GM13976 (cell line): ENCODE measurements at regions of chr9 and their contacts with region 1.

Region 1: DNA sequence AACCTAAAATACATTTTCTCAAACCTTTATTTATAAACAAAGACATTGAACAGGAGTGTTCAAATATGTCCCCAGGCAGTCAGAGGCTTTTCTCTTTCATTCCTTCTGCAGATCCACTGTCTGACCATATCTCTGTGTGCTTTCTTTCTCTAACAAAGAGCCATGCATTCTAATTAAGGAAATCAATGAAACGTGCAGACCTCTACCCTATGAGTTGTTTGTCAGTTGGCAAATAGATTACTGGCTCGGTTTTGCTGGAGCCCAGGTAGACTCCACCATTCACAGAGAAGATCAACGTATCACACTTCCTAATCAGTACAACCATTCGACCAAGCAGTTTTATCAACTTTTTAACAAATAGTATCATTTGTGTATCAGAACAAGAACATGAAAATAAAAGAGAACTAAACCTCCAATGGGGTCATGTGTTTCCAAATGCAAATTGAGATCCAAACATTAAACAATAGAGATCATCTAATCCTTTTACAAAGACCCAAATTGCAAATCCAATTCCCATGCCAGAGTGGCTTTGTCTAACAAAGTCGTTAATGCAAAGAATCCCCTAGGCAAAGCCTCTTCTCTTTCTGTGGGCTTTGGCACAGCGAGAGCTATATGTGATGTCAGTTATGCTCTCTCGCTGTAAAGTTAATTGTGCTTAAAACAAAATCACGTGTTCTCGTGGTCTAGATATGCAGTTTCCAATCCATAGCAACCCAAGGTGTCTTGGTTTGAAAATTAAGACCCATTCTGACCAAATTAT is 16.8 kb downstream of the KLF4 start:
- DNase-seq: no peak
- CTCF ChIP-seq: no peak

Region 2: DNA sequence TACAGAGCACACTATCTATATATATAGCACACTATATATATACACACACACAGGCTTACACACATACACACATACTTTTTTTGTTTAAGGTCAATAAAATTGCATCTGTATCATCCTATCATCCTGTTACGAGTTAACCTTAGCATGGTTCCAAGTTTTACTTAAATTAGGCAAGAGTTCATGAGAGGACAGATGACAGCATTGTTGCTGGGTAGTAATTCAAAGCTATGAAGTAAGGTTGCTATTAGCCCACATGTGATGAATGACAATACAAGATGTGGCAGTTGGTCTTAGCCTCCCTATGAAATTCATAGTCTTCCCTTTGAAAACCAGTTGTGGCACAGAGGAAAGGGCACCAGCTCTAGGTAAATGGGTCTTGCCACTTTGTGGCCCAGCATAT is 945.0 kb after region 1 on chr9:
- in situ Hi-C with region 1: no loop called
- DNase-seq: no peak
- CTCF ChIP-seq: no peak

Region 3: DNA sequence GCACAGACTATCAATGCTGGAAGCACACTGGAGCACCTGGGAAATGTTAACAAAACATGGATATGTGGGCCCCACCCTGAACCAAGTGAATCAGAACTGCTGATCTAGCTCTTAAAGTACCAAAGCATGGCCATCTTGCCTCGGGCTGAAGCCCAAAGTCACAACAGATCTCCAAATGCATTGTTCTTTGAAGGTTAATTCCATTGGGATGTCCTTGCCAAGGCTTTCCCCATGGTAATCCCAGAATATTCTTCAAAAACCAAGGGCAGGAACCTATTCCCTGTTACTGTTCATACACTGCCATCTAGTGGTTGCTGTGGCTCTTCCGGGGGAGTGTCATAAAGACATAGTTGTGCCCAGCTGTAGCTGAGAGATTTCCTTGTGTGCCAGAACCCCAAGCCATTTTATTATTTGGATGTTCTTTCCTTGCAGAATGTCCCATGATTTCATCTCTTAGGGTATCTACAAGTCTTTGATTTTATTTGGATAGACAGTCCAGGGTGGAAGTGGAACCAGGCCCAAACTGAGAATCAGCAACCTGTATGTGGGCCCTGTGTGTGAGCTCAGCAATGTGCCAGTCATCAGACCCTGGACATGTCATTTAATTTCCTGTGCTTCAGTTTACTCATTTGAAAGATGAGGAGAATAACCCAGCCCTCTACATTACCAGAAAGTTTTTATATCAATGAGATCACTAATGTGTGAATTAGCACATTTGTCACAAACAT is 1093.1 kb after region 1 on chr9:
- in situ Hi-C with region 1: loop called (anchors 10 kb)
- DNase-seq: peak; percentile 45
- CTCF ChIP-seq: peak; percentile 75